ENCODE measurements at regions of chr1 and their contacts with region 1.

Region 1: GRCh38 chr1:152052606-152053005 is 15.8 kb upstream of the S100A11 start:
- DNase-seq: peak; percentile 86 to 93 (median 90)
- ATAC-seq: peak; percentile 46 to 49
- H3K4me3 ChIP-seq: no peak overlapping the region
- H3K27ac ChIP-seq: no peak overlapping the region
- H3K4me1 ChIP-seq: peaks cover 1% of the 10 kb centered on the region
- H3K27me3 ChIP-seq: no peaks in the 10 kb centered on the region

Region 2: DNA sequence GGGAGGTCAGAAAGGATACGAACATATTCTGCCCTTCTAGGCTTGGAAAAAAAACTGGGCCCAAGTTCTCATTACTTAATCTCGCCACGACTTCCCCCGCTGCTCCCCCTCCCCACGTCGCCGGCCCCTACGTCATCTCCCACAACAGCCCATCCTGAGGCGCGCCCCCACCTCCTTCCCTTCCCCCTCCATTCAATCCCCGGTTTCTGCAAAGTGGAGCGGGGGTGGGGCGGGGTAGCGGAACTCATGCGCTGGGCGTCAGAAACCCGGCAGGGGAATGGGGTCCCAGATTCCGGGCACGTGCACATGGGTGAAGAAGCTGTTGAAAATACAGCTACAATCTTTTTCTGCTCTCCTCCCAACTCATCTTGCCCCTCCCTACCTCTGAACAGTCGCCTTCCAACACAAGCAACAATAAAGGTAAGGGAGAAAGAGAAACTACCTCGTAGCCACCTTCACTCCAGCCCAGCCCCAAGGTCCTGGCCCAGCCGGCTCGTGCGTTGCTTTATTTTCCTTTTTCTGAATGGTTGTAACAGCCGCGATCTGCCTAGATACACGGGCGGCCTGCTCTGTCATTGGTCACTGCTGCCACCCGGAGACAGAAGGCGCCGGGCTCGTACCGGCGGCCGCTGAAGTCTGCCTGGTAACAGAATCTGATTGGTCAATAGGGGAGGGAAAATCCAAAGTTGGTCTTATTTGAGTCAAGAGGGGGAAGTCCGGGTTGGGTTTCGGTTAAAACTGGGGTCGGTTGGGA is 705.7 kb before region 1 on chr1 and contains the start of gene RFX5:
- intact Hi-C with region 1: no loop called
- DNase-seq: peak; percentile 93 to 97 (median 97)
- ATAC-seq: peak; percentile 98 to 99
- H3K4me3 ChIP-seq: peak within 1 kb of the TSS; percentile 71
- H3K27ac ChIP-seq: peak within 1 kb of the TSS; percentile 84
- H3K4me1 ChIP-seq: peaks cover 3% of the 10 kb centered on the region
- H3K27me3 ChIP-seq: no peaks in the 10 kb centered on the region
- total RNA-seq, gene RFX5: 20.3 to 23.1 (median 21.6) TPM

Region 3: DNA sequence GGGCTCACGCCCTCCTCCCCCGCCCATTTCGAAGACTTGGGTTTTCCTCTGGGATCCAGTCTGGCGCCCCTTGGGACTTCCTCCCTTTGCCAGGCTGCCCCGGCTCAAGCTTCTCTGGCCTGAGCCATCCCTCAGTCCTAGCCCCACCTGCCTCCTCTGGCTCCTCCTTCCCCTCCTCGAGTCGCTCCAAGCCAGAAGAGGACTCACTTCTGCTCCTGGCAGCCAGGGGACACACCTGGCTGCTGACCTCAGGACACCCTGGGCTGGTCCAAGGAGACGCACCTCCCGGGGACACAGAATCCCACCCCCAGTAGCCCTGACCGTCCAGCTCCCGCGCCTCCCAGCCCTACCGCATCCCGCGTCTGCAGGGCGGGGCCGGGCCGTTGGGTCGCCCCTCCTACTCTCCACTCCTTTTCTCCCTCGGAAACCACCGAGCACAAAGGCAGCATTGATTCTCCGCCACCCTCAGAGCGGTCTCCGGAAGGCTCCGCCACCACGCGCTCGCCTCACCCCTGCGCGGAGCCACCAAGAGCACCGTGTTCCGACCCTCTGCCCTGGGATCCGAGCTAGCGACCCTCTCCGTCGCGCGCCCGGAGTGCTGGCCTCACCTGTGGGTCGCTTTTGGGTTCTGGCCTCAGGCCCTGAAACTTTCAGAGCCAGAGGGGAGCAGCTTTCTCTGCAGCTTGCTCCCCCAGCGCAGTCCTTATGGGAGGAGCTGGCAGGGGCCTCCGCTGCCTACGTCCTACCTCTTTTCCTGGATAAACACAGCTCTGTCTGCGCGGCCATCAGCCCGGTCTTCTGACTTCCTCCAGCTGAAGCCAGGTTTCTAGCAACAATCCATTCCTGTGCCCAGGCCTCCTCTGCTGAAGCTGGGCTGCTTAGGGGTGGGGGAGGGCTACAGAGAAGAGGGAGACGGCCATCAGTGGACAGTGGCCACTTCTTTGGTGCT is 212.9 kb before region 1 on chr1 and contains the start of gene C2CD4D:
- intact Hi-C with region 1: no loop called
- DNase-seq: peak; percentile 62 to 87 (median 85)
- ATAC-seq: peak; percentile 79 to 84
- H3K4me3 ChIP-seq: peak within 1 kb of the TSS; percentile 53
- H3K27ac ChIP-seq: no peak within 1 kb of the TSS
- H3K4me1 ChIP-seq: no peaks in the 10 kb centered on the region
- H3K27me3 ChIP-seq: no peaks in the 10 kb centered on the region
- total RNA-seq, gene C2CD4D: 0.11 to 0.21 (median 0.17) TPM in 3 of 4 donors, not detected in the other

Region 4: DNA sequence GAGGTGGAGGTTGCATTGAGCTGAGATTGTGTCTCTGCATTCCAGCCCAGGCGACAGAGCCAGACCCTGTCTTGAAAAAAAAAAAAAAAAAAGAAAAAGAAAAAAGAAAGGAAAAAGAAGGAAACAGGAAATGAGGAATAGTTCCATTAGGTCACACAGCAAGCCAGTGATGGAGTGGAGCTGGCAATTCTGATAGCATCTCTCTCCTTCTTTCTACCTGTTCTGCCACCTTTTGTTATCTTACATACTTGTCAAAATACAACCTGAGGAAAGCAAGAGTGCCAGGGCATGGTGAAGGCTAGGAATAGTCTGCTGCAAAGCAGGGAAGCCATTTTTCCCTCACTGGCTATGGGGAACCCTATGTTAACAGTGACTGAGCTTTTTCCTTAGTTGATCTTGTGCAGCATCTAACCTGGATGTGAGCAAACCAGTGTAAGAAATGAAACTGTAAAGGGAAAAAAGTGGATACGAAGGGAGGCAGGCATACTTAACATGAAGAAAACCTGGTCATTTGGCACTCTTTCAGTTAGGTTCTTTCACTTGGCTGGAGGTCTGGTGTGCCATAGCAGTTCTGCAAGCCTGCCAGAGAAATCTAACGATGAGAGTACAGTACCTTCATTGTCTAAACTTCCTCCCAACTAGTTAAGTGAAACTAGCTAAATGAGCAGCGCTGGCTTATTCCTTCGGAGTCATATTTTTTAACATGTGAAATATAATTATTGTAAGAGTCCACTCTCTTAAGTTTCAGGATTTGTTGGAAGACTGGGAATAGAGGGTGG is 181.2 kb before region 1 on chr1:
- intact Hi-C with region 1: no loop called
- DNase-seq: no peak
- ATAC-seq: no peak
- H3K4me3 ChIP-seq: no peak overlapping the region
- H3K27ac ChIP-seq: no peak overlapping the region
- H3K4me1 ChIP-seq: no peaks in the 10 kb centered on the region
- H3K27me3 ChIP-seq: no peaks in the 10 kb centered on the region

Region 5: DNA sequence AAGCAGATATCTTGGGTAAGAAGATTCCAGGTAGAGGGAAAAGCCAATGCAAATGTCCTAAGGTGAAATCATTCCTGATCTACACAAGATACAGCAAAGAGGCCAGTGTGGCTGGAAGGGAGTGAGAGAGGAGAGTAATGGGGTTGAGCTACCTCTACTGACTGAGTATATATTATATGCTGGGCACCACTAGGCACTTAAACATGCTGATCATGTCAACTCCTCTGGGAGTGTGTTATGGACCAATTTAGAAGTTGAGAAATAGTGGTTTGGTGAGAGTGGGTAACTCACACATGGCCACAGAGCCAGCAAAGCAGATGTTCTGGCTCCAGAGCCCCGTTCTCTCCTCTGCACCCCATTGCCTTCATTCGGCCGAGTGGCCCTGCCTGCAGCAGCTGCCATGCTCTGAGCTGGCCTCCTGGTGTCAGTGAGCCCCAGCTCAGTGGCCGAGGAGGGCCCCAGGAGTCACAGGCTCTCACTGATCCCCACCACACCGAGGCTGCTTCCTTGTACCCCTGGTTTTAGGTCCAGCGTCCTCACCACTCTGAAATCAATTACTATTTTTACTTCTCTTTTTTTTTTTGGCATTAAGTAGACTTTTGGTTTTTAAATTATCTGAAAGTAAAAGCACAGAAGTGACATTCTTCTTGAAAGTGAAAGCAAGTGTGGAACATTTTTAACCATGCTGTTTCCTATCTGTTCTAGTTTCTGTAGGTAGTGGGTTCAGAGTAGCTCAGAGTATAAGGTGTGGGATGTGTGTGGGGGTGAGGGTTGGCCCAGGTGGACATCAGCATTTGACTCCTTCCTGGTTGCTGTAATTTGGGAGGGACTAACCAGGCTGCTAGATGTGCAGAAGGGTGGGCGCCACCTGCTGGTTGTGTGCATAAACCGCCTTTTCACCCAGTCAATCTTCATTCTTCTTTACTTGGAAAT is 407.3 kb after region 1 on chr1:
- intact Hi-C with region 1: loop called in 3 of 4 experiments (anchors 5 kb)
- DNase-seq: peak; percentile 70 to 86 (median 85)
- ATAC-seq: peak; percentile 68 to 81
- H3K4me3 ChIP-seq: no peak overlapping the region
- H3K27ac ChIP-seq: no peak overlapping the region
- H3K4me1 ChIP-seq: no peaks in the 10 kb centered on the region
- H3K27me3 ChIP-seq: no peaks in the 10 kb centered on the region

Measured in right cardiac atrium (tissue), 5 donors.